ENCODE measurements at regions of chr12 and their contacts with region 1.

Region 1: DNA sequence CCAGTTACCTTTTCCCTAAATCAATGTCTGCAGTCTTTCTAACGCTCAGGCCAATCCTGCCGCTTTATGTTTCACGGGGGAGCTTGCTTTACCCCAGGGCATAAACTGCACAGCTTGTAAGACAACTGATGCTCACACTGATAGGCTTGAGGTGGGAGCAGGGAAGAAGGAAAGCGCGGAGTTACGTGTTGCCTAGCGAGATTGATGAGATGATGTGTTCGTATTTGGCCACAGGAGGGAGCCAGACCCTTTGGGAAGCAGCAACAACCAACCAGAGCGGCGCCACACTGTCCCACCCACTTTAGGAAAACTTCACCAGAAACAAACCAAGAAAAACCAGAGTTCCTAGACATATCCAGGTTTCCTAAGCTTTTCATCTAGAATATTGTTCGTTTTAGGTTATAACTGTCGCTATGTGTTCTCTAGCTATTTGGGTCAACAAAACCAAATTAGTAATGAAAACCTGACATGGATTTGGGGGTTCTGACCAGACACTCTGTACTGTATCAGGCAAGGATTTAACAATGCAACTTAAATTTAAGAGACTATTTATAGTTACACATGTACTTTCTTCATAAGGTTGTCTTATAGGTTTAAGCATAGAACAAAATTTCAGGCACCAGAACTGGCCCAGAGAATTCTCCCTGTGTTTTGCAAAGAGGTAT is 2.4 kb downstream of the IL26 start:
- DNase-seq: peak; percentile 43 to 90 (median 68)
- ATAC-seq: peak; percentile 92
- H3K4me3 ChIP-seq: no peak overlapping the region
- H3K4me3 Mint-ChIP-seq: peak overlapping the region; percentile 65
- H3K27ac ChIP-seq: no peak overlapping the region
- H3K27ac Mint-ChIP-seq: peak overlapping the region; percentile 45
- H3K4me1 ChIP-seq: peaks cover 7% of the 10 kb centered on the region
- H3K4me1 Mint-ChIP-seq: peaks cover 7% of the 10 kb centered on the region
- H3K27me3 ChIP-seq: no peaks in the 10 kb centered on the region
- H3K27me3 Mint-ChIP-seq: no peaks in the 10 kb centered on the region
- CTCF ChIP-seq: peak; percentile 83

Region 2: DNA sequence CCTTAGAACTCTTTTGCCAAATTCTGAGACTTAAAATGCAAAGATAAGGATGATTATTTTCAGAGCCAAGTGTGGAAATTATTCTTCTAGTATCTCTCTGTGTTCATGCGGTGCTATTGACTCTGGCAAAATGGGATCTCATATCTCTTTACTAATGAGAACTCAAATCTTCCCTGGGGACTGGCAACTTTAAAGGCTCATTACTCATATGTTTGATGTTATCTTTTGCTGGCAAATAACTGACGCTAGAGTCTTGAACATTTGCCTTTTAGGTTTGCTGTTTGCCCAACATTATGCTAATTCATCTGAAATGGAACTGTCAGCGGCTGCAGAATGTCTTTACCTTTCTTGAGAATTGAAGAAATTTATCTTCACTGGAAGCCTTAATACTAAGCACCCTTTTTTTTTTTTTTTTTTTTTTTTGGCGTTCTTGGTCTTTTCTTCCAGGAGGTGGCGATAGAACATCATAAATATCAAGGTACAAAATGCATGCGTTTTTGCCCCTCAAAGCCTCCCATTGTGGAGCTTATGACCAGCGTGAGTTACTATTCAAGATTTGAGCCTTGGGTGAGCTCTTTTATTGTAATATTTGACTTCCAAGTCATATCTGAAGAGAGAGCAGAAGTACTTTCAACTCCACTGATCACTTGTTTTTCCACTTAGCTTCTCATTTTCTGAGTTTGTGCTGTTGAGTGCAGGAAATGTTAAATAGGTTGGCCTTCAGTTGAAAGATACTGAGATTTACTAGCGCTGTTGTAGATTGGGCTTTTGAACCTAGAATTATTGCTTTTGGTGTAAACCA is 867.4 kb before region 1 on chr12:
- CTCF ChIA-PET with region 1: interaction called, 9 read pairs
- POLR2A ChIA-PET with region 1: no interaction called
- intact Hi-C with region 1: loop called in 1 of 2 experiments (anchors 1 kb)
- DNase-seq: peak in 4 of 9 experiments; percentile 11 to 76 (median 44)
- ATAC-seq: peak; percentile 61
- H3K4me3 ChIP-seq: no peak overlapping the region
- H3K4me3 Mint-ChIP-seq: no peak overlapping the region
- H3K27ac ChIP-seq: no peak overlapping the region
- H3K27ac Mint-ChIP-seq: no peak overlapping the region
- H3K4me1 ChIP-seq: peaks cover 5% of the 10 kb centered on the region
- H3K4me1 Mint-ChIP-seq: peaks cover 7% of the 10 kb centered on the region
- H3K27me3 ChIP-seq: no peaks in the 10 kb centered on the region
- H3K27me3 Mint-ChIP-seq: no peaks in the 10 kb centered on the region
- CTCF ChIP-seq: peak; percentile 76

Region 3: DNA sequence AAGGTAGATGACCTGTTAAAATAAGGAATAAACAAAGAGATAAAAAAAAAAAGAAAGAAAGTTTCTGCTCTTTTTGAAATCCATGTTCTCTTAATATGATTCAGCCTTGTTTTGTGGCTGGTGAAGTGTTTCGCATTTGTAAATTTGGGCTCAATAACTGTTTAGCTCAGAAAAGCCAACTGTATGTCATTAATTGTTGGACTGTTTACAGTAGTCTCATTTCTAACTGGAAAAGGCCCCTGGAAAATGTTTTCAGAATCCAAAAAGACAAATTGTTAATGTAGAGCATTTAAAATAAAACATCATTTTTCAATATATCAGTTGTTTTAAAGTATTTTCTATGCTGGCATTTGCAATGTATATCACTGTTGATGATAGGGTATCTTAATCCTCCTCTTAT is 622.1 kb before region 1 on chr12:
- CTCF ChIA-PET with region 1: no interaction called
- POLR2A ChIA-PET with region 1: no interaction called
- intact Hi-C with region 1: no loop called
- DNase-seq: no peak
- ATAC-seq: no peak
- H3K4me3 ChIP-seq: no peak overlapping the region
- H3K4me3 Mint-ChIP-seq: no peak overlapping the region
- H3K27ac ChIP-seq: no peak overlapping the region
- H3K27ac Mint-ChIP-seq: no peak overlapping the region
- H3K4me1 ChIP-seq: no peaks in the 10 kb centered on the region
- H3K4me1 Mint-ChIP-seq: peaks cover 8% of the 10 kb centered on the region
- H3K27me3 ChIP-seq: no peaks in the 10 kb centered on the region
- H3K27me3 Mint-ChIP-seq: no peaks in the 10 kb centered on the region
- CTCF ChIP-seq: no peak

Region 4: GRCh38 chr12:68158432-68158831 is 64.8 kb before region 1 on chr12:
- CTCF ChIA-PET with region 1: interaction called, 10 read pairs
- POLR2A ChIA-PET with region 1: no interaction called
- intact Hi-C with region 1: loop called in 1 of 2 experiments (anchors 5 kb)
- DNase-seq: peak in 4 of 9 experiments; percentile 21 to 79 (median 49)
- ATAC-seq: peak; percentile 62
- H3K4me3 ChIP-seq: peak overlapping the region in 1 of 2 experiments; percentile 57
- H3K4me3 Mint-ChIP-seq: peak overlapping the region; percentile 33
- H3K27ac ChIP-seq: peak overlapping the region in 1 of 2 experiments; percentile 80
- H3K27ac Mint-ChIP-seq: no peak overlapping the region
- H3K4me1 ChIP-seq: peaks cover 5% of the 10 kb centered on the region
- H3K4me1 Mint-ChIP-seq: peaks cover 51% of the 10 kb centered on the region
- H3K27me3 ChIP-seq: no peaks in the 10 kb centered on the region
- H3K27me3 Mint-ChIP-seq: no peaks in the 10 kb centered on the region
- CTCF ChIP-seq: peak; percentile 61

Region 5: DNA sequence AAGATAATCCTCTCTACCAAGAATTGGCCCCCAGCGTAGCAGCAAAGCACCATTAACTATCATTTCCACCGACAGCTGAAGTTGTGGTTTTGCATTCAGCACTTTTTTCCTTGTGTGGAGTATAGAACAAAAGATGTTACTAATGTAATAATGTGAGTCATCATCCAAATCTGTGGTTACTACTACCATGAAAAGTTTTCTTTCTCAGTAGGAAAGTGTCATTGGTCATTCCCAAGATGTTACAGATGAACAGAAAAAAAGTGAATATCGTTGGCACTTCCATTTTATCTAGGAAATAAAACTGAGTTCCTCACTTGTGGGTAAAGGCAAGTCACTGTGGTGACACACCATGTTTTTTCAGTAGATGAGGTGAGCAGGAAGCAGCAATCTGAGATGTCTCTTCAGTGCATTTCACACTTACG is 33.4 kb before region 1 on chr12:
- CTCF ChIA-PET with region 1: interaction called, 13 read pairs
- POLR2A ChIA-PET with region 1: no interaction called
- intact Hi-C with region 1: no loop called
- DNase-seq: peak in 5 of 9 experiments; percentile 21 to 78 (median 34)
- ATAC-seq: peak; percentile 86
- H3K4me3 ChIP-seq: no peak overlapping the region
- H3K4me3 Mint-ChIP-seq: peak overlapping the region; percentile 63
- H3K27ac ChIP-seq: peak overlapping the region in 1 of 2 experiments; percentile 64
- H3K27ac Mint-ChIP-seq: peak overlapping the region; percentile 85
- H3K4me1 ChIP-seq: peaks cover 14% of the 10 kb centered on the region
- H3K4me1 Mint-ChIP-seq: peaks cover 30% of the 10 kb centered on the region
- H3K27me3 ChIP-seq: no peaks in the 10 kb centered on the region
- H3K27me3 Mint-ChIP-seq: no peaks in the 10 kb centered on the region
- CTCF ChIP-seq: no peak

Region 6: DNA sequence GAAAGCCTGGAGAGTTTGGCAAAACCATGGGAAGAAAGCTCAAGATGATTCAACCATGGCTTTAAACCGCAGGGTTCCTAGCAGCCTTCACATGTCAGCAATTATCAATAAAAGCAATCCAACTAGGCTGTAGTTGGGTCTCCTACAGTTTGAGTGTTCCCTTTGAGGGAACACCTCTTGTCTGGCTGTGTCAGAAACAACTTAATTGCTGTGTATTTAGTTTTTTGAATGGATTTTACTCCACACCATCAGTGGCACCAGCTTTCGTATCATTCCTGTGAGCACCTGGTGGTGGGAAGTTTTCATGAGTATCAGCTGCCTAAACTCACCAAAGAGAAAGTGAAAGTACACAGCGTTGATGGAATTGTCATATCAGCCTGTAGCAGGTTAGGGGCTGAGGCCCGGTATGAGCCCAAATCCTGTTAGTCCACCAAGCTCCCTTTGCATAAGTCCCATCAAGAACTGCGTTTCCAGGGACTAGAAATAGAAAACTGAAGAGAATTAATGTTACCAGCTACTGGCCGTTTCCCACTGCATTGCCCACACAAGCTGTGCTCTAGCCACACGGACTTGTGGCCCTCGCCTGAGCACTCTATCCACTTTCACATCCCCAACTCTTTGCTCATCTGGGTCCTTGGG is 13.3 kb after region 1 on chr12:
- CTCF ChIA-PET with region 1: interaction called, 20 read pairs
- POLR2A ChIA-PET with region 1: interaction called, 7 read pairs
- intact Hi-C with region 1: no loop called
- DNase-seq: peak in 8 of 9 experiments; percentile 11 to 84 (median 36)
- ATAC-seq: peak; percentile 79
- H3K4me3 ChIP-seq: peak overlapping the region; percentile 46 to 48
- H3K4me3 Mint-ChIP-seq: peak overlapping the region; percentile 94
- H3K27ac ChIP-seq: peak overlapping the region; percentile 23 to 60
- H3K27ac Mint-ChIP-seq: peak overlapping the region; percentile 97
- H3K4me1 ChIP-seq: peaks cover 35% of the 10 kb centered on the region
- H3K4me1 Mint-ChIP-seq: peaks cover 48% of the 10 kb centered on the region
- H3K27me3 ChIP-seq: no peaks in the 10 kb centered on the region
- H3K27me3 Mint-ChIP-seq: no peaks in the 10 kb centered on the region
- CTCF ChIP-seq: no peak

Region 7: GRCh38 chr12:68807576-68808387 is 584.6 kb after region 1 on chr12 and contains the start of gene MDM2:
- CTCF ChIA-PET with region 1: no interaction called
- POLR2A ChIA-PET with region 1: no interaction called
- intact Hi-C with region 1: loop called in 1 of 2 experiments (anchors 10 kb)
- DNase-seq: peak; percentile 94 to 99 (median 97)
- ATAC-seq: peak; percentile 91
- H3K4me3 ChIP-seq: peak within 1 kb of the TSS; percentile 97
- H3K4me3 Mint-ChIP-seq: peak within 1 kb of the TSS; percentile 95
- H3K27ac ChIP-seq: peak within 1 kb of the TSS; percentile 86 to 95
- H3K27ac Mint-ChIP-seq: peak within 1 kb of the TSS; percentile 97
- H3K4me1 ChIP-seq: peaks cover 24% of the 10 kb centered on the region
- H3K4me1 Mint-ChIP-seq: peaks cover 30% of the 10 kb centered on the region
- H3K27me3 ChIP-seq: no peaks in the 10 kb centered on the region
- H3K27me3 Mint-ChIP-seq: no peaks in the 10 kb centered on the region
- CTCF ChIP-seq: peak; percentile 66
- total RNA-seq, gene MDM2: 95.1 to 98.0 TPM